Left colon (tissue), 2 donors: ENCODE measurements at regions of chr22 and their contacts with region 1.

Region 1: GRCh38 chr22:46035742-46036557 is 59.0 kb upstream of the WNT7B start:
- DNase-seq: peak; percentile 99 to 100
- ATAC-seq: peak; percentile 91

Region 2: DNA sequence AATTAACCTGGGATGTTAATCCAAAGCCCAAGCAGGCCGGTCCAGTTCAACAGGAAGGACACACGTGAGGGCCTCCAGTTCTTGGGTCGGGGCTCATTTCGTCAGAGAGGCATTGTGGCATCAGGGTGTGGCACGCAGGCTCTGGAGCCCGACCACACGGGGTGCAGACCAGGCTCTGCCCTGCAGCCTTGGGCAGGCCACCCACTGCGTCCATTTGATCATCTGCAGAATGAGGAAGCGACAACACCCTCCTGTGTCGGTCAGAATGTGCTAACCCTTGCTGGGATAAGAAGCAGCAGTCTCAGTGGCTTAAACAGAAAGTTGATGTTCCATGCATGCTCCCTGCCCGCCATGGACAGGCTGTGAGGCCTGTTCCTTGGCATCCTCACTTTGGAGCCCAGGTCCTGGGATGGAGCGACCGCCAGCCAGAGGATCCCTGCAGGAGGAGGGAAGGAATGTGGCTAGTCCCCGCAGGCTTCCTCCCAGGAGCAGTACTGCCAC is 611.7 kb before region 1 on chr22:
- intact Hi-C with region 1: no loop called
- DNase-seq: no peak
- ATAC-seq: no peak

Region 3: DNA sequence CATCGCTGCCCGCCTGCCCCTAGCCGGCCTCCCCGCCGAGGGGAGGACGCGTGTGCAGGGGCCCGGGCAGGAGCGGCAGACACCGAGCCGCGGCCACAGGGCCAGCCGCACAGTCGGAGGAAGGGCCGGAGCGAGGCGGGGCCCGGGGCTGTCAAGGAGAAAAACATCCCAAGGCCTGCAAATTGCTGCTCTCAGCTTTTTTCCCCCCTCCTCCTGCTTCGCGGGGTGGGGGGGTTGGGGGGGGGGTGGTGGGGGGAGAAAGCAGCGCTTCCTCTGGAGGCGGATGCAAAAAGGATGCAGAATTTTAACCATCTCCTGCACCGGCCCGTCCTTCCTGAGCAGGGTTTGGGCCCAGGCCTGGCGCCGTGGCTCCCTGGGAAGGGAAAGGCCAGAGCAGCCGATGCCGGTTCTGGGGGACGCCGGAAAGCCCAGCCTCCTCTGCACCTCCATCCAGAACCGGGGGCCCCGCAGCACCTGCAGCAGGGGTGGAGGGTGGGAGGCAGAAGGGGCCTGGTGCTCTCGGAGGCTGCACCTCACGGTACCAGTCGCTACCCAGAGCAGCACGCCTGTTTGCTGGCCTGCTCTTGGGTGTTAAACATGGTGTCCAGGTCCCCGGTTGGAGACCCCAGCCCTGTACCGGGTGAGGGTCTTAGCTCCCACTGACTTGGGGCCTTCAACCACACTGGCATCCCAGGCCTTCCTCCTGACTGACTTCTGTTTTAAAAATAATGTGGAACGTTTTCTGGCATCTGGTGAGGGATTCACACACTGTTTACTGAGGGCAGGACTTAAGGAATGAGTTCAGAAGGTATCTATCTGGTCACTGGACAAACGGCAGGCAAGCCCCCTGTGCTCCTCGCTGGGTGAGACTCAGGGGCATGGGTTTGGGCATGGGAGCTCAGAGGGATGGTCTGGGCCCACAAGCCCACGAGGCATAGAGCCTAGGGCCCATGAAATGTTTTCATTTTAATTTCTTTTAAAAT is 18.4 kb after region 1 on chr22:
- intact Hi-C with region 1: loop called in 1 of 2 experiments (anchors 2 kb)
- DNase-seq: peak; percentile 65 to 73
- ATAC-seq: peak; percentile 47